GM12878 (cell line): ENCODE measurements at regions of chr18 and their contacts with region 1.

Region 1: GRCh38 chr18:59907172-59907571 is 7.4 kb downstream of the PMAIP1 start:
- DNase-seq: no peak
- ATAC-seq: peak; percentile 16
- H3K4me3 ChIP-seq: peak overlapping the region; percentile 22; the same call in 1 of the 2 replicates
- H3K27ac ChIP-seq: peak overlapping the region; percentile 95
- H3K4me1 ChIP-seq: peaks cover 43% of the 10 kb centered on the region
- H3K27me3 ChIP-seq: no peaks in the 10 kb centered on the region
- CTCF ChIP-seq: no peak
- EP300 ChIP-seq: peak in 1 of 2 experiments; percentile 36; a peak in 1 of 4 replicates
- POLR2A ChIP-seq: no peak
- RAD21 ChIP-seq: no peak

Region 2: DNA sequence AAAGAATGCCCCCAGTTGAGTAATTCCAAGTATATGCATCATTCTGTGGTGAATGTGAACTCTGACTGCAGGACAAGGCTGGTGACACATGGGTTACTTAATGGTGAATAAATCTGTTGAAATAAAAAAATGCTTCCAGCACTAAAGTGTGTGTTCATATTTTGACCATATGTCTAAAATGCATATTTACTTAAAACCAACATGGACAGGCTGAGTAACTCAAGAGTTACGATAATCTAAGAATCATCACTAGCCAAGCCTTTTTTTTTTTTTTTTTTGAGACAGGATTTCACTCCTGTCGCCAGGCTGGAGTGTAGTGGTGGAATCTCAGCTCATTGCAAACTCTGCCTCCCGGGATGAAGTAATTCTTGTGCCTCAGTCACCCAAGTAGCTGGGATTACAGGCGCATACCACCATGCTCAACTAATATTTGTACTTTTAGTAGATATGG is 162.9 kb before region 1 on chr18:
- CTCF ChIA-PET with region 1: no interaction called
- POLR2A ChIA-PET with region 1: no interaction called
- RAD21 ChIA-PET with region 1: no interaction called
- SMC1A ChIA-PET with region 1: no interaction called
- in situ Hi-C with region 1: no loop called
- intact Hi-C with region 1: no loop called
- DNase-seq: no peak
- ATAC-seq: no peak
- H3K4me3 ChIP-seq: no peak overlapping the region
- H3K27ac ChIP-seq: no peak overlapping the region
- H3K4me1 ChIP-seq: no peaks in the 10 kb centered on the region
- H3K27me3 ChIP-seq: no peaks in the 10 kb centered on the region; a peak in 1 of 4 replicates
- CTCF ChIP-seq: no peak
- EP300 ChIP-seq: no peak
- POLR2A ChIP-seq: no peak
- RAD21 ChIP-seq: no peak

Region 3: DNA sequence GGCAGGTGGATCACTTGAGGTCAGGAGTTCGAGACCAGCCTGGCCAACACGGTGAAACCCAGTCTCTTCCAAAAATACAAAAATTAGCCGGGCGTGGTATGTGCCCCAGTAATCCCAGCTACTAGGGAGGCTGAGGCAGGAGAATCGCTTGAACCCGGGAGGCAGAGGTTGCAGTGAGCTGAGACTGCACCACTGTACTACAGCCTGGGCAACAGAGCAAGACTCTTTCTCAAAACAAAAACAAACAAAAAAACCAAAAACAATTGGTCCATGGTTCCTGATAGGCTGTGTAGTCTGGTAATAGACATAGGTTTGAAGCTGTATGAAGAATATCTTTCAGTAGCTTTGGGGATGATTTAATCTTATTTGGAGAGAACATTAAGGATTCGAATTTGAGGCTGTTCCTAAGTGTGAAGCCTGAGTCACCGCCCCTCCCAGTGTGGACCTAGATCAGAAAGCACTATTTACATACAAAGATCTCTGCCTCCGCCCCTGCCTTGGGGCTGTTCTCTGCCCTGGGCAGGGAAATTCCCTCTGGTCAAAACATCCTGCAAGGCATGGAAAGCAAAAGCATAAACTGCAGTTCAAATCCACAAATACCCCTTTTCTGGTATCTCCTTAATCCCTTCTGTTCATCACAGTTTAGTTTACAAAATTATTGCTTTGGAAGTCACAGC is 60.2 kb before region 1 on chr18:
- CTCF ChIA-PET with region 1: interaction called, 3 read pairs
- POLR2A ChIA-PET with region 1: interaction called, 6 read pairs
- RAD21 ChIA-PET with region 1: interaction called, 11 read pairs
- SMC1A ChIA-PET with region 1: interaction called, 37 read pairs
- in situ Hi-C with region 1: loop called (anchors 10 kb)
- intact Hi-C with region 1: no loop called
- DNase-seq: peak; percentile 83
- ATAC-seq: peak; percentile 93
- H3K4me3 ChIP-seq: peak overlapping the region; percentile 8; the same call in 1 of the 2 replicates
- H3K27ac ChIP-seq: peak overlapping the region; percentile 82
- H3K4me1 ChIP-seq: peaks cover 24% of the 10 kb centered on the region
- H3K27me3 ChIP-seq: no peaks in the 10 kb centered on the region
- CTCF ChIP-seq: no peak
- EP300 ChIP-seq: peak in 1 of 2 experiments; percentile 37; a peak in 1 of 4 replicates
- POLR2A ChIP-seq: no peak
- RAD21 ChIP-seq: peak; percentile 26; the same call in 1 of the 2 replicates

Region 4: DNA sequence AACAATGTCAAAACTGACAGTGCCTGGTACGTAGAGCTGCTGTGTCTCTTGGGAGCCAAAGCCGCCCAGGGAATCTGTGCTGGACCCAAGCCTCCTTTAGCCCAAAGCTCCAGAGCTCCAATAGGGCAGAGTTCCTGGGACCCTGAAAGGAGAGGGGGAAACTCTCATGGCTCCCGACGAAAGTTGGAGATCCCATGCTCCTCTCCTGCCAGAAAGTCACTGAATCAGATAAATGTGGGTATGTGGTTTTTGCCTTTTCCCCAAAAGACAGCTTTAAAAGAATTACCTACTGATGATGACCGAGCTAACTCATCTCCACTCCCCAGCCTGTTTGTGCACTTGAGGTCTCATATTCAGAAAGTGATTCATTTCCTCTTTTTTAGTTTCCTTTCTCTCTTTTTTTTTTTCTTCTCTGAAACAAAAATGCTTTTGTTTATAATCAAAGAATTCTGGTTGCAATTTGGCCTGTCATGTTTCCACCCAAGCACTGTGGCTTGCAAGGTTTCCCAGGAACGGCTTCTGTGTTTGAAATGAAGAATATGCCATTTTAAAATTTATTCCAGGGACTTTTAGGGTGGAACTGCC is 21.5 kb before region 1 on chr18:
- CTCF ChIA-PET with region 1: interaction called, 30 read pairs
- POLR2A ChIA-PET with region 1: interaction called, 68 read pairs
- RAD21 ChIA-PET with region 1: interaction called, 15 read pairs
- SMC1A ChIA-PET with region 1: interaction called, 72 read pairs
- in situ Hi-C with region 1: no loop called
- intact Hi-C with region 1: no loop called
- DNase-seq: peak; percentile 78
- ATAC-seq: peak; percentile 86
- H3K4me3 ChIP-seq: peak overlapping the region; percentile 63
- H3K27ac ChIP-seq: peak overlapping the region; percentile 91
- H3K4me1 ChIP-seq: peaks cover 38% of the 10 kb centered on the region
- H3K27me3 ChIP-seq: no peaks in the 10 kb centered on the region
- CTCF ChIP-seq: no peak
- EP300 ChIP-seq: peak; percentile 88 to 95
- POLR2A ChIP-seq: no peak
- RAD21 ChIP-seq: 0 out of 2 replicates have a peak, but pooled peaks have one; percentile 4

Region 5: GRCh38 chr18:59927246-59927825 is 20.2 kb after region 1 on chr18:
- CTCF ChIA-PET with region 1: interaction called, 19 read pairs
- POLR2A ChIA-PET with region 1: interaction called, 67 read pairs
- RAD21 ChIA-PET with region 1: interaction called, 187 read pairs
- SMC1A ChIA-PET with region 1: interaction called, 289 read pairs
- in situ Hi-C with region 1: no loop called
- intact Hi-C with region 1: loop called (anchors 1 kb)
- DNase-seq: peak; percentile 98
- ATAC-seq: peak; percentile 82
- H3K4me3 ChIP-seq: no peak overlapping the region
- H3K27ac ChIP-seq: peak overlapping the region; percentile 93
- H3K4me1 ChIP-seq: peaks cover 49% of the 10 kb centered on the region
- H3K27me3 ChIP-seq: no peaks in the 10 kb centered on the region
- CTCF ChIP-seq: no peak
- EP300 ChIP-seq: peak; percentile 63 to 67; a peak in 3 of 4 replicates
- POLR2A ChIP-seq: no peak
- RAD21 ChIP-seq: no peak

Region 6: DNA sequence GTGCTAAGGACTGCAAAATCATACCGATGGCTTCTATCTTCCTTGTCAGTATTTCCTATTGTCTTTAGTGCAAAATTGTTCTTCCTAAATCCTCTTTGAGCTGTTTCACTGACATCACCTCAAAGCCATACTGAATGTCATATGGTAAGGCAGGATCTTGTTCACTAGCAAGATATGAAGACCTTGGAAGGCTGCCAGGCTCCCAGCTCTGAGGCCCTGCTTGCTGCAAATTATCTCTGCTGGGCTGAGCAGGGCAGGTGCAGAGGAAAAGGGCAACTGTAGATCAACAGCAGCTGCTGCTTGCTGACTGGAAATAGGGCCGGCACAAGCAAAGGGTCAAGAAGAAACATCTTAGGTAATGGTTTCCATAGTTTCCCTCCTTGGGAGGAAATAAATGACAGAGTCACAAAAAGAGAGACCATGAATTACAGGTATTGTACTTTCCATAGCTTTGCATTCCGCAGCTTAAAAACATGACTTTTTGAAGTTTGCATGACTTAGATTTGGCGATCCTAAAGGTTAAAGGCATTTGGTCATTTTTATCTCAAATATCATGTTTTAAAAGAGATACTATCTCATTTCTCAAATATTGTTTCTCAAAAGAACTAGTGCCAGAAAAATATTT is 50.9 kb after region 1 on chr18:
- CTCF ChIA-PET with region 1: interaction called, 12 read pairs
- POLR2A ChIA-PET with region 1: interaction called, 13 read pairs
- RAD21 ChIA-PET with region 1: interaction called, 55 read pairs
- SMC1A ChIA-PET with region 1: interaction called, 68 read pairs
- in situ Hi-C with region 1: no loop called
- intact Hi-C with region 1: loop called (anchors 2 kb)
- DNase-seq: no peak
- ATAC-seq: peak; percentile 43
- H3K4me3 ChIP-seq: no peak overlapping the region
- H3K27ac ChIP-seq: peak overlapping the region; percentile 10; the same call in 1 of the 2 replicates
- H3K4me1 ChIP-seq: peaks cover 50% of the 10 kb centered on the region
- H3K27me3 ChIP-seq: no peaks in the 10 kb centered on the region
- CTCF ChIP-seq: no peak
- EP300 ChIP-seq: no peak
- POLR2A ChIP-seq: no peak
- RAD21 ChIP-seq: no peak

Region 7: DNA sequence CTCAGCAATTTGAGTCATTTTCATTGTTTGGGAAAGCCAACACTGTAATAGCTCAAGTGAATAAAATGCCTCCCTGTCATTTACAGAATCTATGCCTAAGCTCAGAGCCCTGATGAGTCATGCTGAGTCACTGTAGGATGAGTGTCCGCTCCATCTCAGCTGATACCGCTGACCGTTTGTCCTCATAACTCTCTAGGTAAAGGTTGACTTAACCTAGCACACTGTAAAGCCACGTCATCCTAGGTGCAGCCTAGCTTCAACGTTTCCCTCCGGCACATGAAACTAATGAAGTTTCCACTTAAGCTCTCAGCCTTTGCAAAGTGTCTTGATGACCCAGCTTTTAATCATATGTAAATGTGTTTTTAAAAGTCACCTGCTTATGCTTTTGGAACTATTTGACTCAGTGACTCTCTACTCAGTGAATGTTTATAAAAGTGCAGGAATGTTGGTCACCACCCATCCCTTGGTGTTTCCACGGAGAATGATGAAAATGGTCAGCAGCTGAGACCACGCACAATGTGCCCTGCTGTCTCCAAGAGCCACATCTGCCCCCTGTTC is 146.7 kb after region 1 on chr18:
- CTCF ChIA-PET with region 1: no interaction called
- POLR2A ChIA-PET with region 1: no interaction called
- RAD21 ChIA-PET with region 1: no interaction called
- SMC1A ChIA-PET with region 1: no interaction called
- in situ Hi-C with region 1: no loop called
- intact Hi-C with region 1: no loop called
- DNase-seq: peak; percentile 8
- ATAC-seq: peak; percentile 67
- H3K4me3 ChIP-seq: no peak overlapping the region
- H3K27ac ChIP-seq: no peak overlapping the region
- H3K4me1 ChIP-seq: no peaks in the 10 kb centered on the region; the same call in 1 of the 2 replicates
- H3K27me3 ChIP-seq: no peaks in the 10 kb centered on the region
- CTCF ChIP-seq: no peak
- EP300 ChIP-seq: no peak
- POLR2A ChIP-seq: no peak
- RAD21 ChIP-seq: no peak